HEK293 (cell line): ENCODE measurements at regions of chr6 and their contacts with region 1.

Region 1: GRCh38 chr6:116287689-116288282 is 8.1 kb upstream of the TSPYL1 start:
- H3K4me3 ChIP-seq: no peak overlapping the region
- H3K27ac ChIP-seq: no peak overlapping the region
- H3K4me1 ChIP-seq: no peaks in the 10 kb centered on the region
- CTCF ChIP-seq: peak; percentile 24; the same call in 1 of the 2 replicates

Region 2: DNA sequence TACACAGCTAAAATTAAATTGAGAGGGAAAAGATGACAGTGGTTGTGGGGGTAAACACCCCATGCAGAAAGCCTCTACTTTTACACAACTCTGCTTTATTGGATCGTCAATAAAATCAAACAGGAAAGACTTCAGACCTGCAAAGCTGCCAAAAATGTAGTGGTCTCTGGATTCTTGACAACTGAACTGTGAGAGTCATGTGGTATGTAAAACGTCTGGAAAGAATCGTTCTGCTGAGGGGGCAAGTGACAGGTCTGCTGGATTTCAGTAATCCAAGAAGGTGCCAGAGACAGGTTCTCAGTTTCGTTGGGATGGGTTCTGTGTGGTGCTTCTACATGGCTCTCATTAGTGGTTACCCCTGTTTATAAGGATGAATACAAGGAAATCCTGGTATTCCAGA is 97.2 kb before region 1 on chr6:
- CTCF ChIA-PET with region 1: no interaction called
- POLR2A ChIA-PET with region 1: no interaction called
- H3K4me3 ChIP-seq: no peak overlapping the region
- H3K27ac ChIP-seq: no peak overlapping the region
- H3K4me1 ChIP-seq: no peaks in the 10 kb centered on the region
- CTCF ChIP-seq: no peak

Region 3: GRCh38 chr6:116268589-116269293 is 19.0 kb before region 1 on chr6:
- CTCF ChIA-PET with region 1: interaction called, 33 read pairs
- POLR2A ChIA-PET with region 1: no interaction called
- H3K4me3 ChIP-seq: no peak overlapping the region
- H3K27ac ChIP-seq: no peak overlapping the region
- H3K4me1 ChIP-seq: no peaks in the 10 kb centered on the region
- CTCF ChIP-seq: peak; percentile 76

Region 4: DNA sequence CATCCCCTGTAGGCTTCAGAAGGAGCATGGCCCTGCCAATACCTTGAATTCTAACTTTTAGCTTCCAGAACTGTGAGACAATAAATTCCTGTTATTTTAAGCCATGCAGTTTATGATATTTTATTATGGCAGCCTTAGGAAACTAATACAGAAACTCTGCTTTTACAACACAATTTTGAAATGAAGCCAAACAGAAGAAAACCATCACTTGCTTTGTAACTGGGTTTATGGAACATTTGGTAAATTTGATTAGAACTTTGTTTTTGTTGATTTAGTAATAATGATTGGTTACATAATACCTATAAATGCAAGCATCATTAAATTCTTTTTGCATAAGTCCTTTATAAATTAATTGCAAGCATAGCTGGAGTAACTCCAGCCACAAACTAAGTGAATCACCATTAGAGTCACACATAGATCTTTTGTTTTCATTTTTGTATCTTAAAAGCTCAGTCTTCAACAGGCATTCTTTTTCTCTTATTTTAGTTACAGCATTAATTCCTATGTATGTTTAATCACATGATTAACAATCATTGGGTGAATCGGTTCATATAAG is 25.5 kb after region 1 on chr6:
- CTCF ChIA-PET with region 1: interaction called, 18 read pairs
- POLR2A ChIA-PET with region 1: no interaction called
- H3K4me3 ChIP-seq: no peak overlapping the region
- H3K27ac ChIP-seq: no peak overlapping the region
- H3K4me1 ChIP-seq: 0 out of 2 replicates have a peak, but pooled peaks cover 2% of the 10 kb centered on the region
- CTCF ChIP-seq: no peak

Region 5: GRCh38 chr6:116424001-116424400 is 136.2 kb after region 1 on chr6:
- CTCF ChIA-PET with region 1: interaction called, 14 read pairs
- POLR2A ChIA-PET with region 1: no interaction called
- H3K4me3 ChIP-seq: no peak overlapping the region
- H3K27ac ChIP-seq: no peak overlapping the region
- H3K4me1 ChIP-seq: no peaks in the 10 kb centered on the region
- CTCF ChIP-seq: no peak

Region 6: DNA sequence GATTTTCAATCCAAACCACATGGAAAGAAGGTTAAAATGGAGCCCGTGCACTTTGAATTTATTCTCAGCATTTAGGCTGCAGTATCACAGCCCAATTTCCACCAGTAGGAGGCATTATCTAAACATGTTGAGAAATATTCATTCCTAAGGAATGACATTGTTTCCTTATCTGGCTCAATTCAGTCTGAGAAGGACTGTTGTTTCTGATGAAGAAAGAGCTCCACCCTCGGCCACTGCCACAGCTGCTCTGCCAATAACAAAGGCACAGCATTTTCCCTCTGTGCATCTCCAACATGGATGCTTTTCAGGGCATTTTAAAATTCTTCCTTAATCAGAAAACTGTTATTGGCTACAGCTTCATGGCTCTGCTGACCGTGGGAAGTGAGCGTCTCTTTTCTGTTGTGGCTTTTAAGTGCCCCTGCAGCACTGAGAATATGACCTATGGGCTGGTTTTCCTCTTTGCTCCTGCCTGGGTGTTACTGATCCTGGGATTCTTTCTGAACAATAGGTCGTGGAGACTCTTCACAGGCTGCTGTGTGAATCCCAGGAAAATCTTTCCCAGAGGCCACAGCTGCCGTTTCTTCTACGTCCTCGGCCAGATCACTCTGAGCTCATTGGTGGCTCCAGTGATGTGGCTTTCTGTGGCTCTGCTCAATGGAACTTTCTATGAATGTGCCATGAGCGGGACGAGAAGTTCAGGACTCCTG is 223.8 kb after region 1 on chr6 and contains the start of gene CALHM5:
- CTCF ChIA-PET with region 1: interaction called, 21 read pairs
- POLR2A ChIA-PET with region 1: no interaction called
- H3K4me3 ChIP-seq: peak within 1 kb of the TSS; percentile 27
- H3K27ac ChIP-seq: peak within 1 kb of the TSS; percentile 28
- H3K4me1 ChIP-seq: peaks cover 13% of the 10 kb centered on the region
- CTCF ChIP-seq: peak; percentile 50

Region 7: DNA sequence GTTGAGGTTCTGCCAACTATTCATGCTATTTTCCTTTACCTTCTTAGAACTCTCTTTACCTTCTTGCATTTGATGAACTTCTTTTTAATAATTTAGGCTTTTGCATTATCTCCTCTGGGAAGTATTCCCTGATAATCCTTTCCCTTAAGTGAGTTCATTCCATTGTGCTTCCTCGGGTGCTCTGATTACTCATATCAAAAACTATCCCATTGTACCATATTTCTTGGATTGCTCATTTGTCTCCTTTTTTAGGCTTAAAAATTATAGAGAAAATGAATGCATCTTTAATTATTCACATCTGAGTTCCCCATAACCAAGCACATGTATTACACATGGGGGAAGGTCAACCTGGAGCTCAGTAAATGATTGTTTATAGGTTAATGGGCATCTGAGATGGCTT is 268.3 kb after region 1 on chr6:
- CTCF ChIA-PET with region 1: interaction called, 44 read pairs
- POLR2A ChIA-PET with region 1: no interaction called
- H3K4me3 ChIP-seq: no peak overlapping the region
- H3K27ac ChIP-seq: no peak overlapping the region
- H3K4me1 ChIP-seq: peaks cover 4% of the 10 kb centered on the region; the same call in 1 of the 2 replicates
- CTCF ChIP-seq: no peak